ENCODE measurements at regions of chr18 and their contacts with region 1.

Region 1: GRCh38 chr18:12516049-12516630 is 108.4 kb downstream of the PRELID3A start:
- DNase-seq: no peak
- H3K4me3 ChIP-seq: no peak overlapping the region
- H3K27ac ChIP-seq: no peak overlapping the region
- H3K4me1 ChIP-seq: no peaks in the 10 kb centered on the region
- H3K27me3 ChIP-seq: no peaks in the 10 kb centered on the region
- CTCF ChIP-seq: no peak
- POLR2A ChIP-seq: no peak

Region 2: DNA sequence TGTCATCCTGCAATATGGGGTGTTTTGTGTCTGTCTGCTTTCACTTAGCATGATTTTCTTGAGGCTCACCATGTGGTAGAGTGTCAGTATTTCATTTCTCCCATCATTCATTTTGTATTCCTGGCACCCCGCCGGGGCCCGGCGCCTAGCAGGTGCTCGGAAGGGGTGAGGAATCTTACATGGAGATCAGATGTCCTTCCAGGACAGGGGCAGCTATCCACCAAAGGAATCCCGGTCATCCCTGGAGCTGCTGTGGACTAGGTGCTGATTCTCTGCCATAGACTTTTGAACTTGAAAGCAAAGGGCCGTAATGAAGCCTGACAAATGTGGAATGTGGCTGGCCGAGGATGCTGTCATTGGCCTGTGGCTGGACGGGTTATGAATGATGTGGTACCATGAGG is 106.1 kb before region 1 on chr18:
- intact Hi-C with region 1: loop called (anchors 10 kb)
- DNase-seq: no peak
- H3K4me3 ChIP-seq: no peak overlapping the region
- H3K27ac ChIP-seq: peak overlapping the region in 1 of 2 donors; percentile 3
- H3K4me1 ChIP-seq: no peaks in the 10 kb centered on the region
- H3K27me3 ChIP-seq: no peaks in the 10 kb centered on the region
- CTCF ChIP-seq: no peak
- POLR2A ChIP-seq: no peak

Region 3: DNA sequence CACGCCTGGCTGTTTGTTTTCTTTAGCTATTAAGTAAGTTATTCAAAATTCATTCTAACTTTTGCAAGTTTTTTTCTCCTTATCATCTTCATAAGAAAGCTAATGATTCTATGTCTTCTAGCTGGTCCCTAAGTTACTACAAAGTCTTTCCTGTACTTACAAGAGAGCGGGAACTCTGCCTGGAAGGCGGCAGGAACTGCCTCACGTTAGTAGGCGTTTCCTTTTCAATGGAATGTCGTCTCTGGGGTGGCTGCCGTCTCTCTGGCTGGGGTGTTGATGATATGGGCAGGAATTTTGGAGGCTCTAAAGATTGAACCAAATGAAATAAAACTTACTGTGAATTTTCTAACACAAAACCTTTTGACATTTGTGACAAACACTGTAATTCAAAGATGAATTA is 52.9 kb before region 1 on chr18:
- intact Hi-C with region 1: loop called (anchors 2 kb)
- DNase-seq: no peak
- H3K4me3 ChIP-seq: no peak overlapping the region
- H3K27ac ChIP-seq: no peak overlapping the region
- H3K4me1 ChIP-seq: no peaks in the 10 kb centered on the region
- H3K27me3 ChIP-seq: no peaks in the 10 kb centered on the region
- CTCF ChIP-seq: no peak
- POLR2A ChIP-seq: no peak

Region 4: GRCh38 chr18:12485479-12486105 is 30.5 kb before region 1 on chr18:
- intact Hi-C with region 1: no loop called
- DNase-seq: no peak
- H3K4me3 ChIP-seq: no peak overlapping the region
- H3K27ac ChIP-seq: no peak overlapping the region
- H3K4me1 ChIP-seq: no peaks in the 10 kb centered on the region
- H3K27me3 ChIP-seq: no peaks in the 10 kb centered on the region
- CTCF ChIP-seq: no peak
- POLR2A ChIP-seq: no peak

Measured in breast epithelium (tissue), 4 donors.